ENCODE measurements at regions of chr2 and their contacts with region 1.

Region 1: GRCh38 chr2:197499594-197500526 is at the starts of genes HSPD1 and HSPE1:
- DNase-seq: peak; percentile 99
- H3K4me3 Mint-ChIP-seq: peak within 1 kb of the TSS; percentile 92
- H3K27ac Mint-ChIP-seq: peak within 1 kb of the TSS; percentile 98
- H3K4me1 Mint-ChIP-seq: peaks cover 51% of the 10 kb centered on the region
- H3K27me3 Mint-ChIP-seq: no peaks in the 10 kb centered on the region
- total RNA-seq, gene HSPD1: 1,191 to 1,210 TPM
- total RNA-seq, gene HSPE1: 294 to 310 TPM

Region 2: DNA sequence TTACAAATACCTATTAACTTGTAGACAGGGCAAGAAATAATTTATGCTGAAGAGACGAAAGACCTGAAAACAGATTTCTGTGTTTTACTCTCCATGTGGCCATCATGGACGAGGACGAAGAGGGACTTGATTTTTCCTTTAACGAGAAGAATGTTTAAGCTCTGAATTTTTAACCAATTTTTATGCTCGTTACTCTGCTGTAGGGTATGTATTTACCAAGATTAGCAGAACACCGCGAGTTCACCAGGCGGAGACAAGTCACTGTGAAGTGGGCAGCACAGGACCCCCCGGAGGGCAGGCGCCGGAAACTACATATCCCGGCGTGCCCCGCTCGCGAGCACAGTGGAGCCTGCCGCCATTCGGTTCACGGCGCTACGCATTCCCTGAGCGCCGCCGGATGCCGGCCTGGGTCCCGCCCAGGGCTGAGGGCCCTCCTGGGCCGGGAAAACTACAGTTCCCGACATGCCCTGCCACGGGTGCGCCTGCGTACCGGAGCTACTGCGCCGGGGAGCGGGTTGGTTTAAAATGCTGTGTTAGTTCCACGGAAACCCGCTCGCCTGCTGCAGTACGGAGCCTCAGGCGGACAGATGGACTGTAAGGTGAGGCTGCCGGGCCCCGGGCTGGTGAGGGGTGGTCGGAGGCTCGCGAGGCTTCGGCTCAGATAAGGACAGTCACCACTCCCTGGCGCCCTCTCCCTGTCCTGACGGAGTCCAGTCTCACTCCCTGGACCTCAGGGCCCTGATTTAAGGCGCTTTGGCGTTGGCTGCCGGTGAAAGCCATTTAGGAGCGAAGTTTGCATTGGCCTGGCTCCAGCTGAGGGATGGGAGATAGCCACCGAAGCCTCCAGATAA is 860.5 kb before region 1 on chr2 and contains the start of gene CCDC150:
- CTCF ChIA-PET with region 1: no interaction called
- intact Hi-C with region 1: loop called (anchors 1 kb)
- DNase-seq: peak; percentile 97
- H3K4me3 Mint-ChIP-seq: peak within 1 kb of the TSS; percentile 92
- H3K27ac Mint-ChIP-seq: peak within 1 kb of the TSS; percentile 48
- H3K4me1 Mint-ChIP-seq: peaks cover 11% of the 10 kb centered on the region
- H3K27me3 Mint-ChIP-seq: peaks cover 1% of the 10 kb centered on the region
- total RNA-seq, gene CCDC150: 10.1 to 10.8 TPM

Region 3: GRCh38 chr2:197198890-197199289 is 301.0 kb before region 1 on chr2:
- CTCF ChIA-PET with region 1: interaction called, 3 read pairs
- intact Hi-C with region 1: loop called (anchors 2 kb)
- DNase-seq: peak; percentile 93
- H3K4me3 Mint-ChIP-seq: peak overlapping the region; percentile 83
- H3K27ac Mint-ChIP-seq: peak overlapping the region; percentile 96
- H3K4me1 Mint-ChIP-seq: peaks cover 86% of the 10 kb centered on the region
- H3K27me3 Mint-ChIP-seq: no peaks in the 10 kb centered on the region

Region 4: DNA sequence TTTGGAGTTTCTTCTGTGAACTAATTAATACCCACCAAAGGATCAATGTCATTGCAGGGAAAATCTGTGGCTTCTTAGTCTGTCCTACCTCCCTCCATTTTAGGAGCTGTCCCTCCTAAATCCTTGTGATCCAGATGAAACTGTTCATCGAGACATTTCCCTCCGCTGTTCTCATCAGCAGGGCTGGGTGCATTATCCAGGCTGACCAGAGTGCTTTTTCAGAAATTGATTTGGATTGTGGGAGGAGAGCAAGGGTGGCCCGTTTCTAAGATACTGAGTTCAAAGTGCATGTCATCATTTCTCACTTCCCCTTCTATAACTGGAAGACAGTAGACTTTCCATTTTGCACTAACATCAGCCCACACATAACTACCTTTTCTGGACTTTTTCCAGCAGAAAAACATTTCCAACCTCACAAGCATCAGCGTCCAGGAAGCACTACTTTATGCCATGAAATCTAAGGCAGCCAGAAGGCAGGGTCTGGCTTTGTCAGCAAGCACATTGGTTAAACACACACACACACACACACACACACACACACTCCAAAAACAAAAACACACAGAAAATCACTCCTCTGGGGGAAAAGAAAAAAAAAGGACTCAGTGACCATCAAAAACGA is 283.4 kb before region 1 on chr2:
- CTCF ChIA-PET with region 1: no interaction called
- intact Hi-C with region 1: no loop called
- DNase-seq: no peak
- H3K4me3 Mint-ChIP-seq: peak overlapping the region; percentile 69
- H3K27ac Mint-ChIP-seq: peak overlapping the region; percentile 97
- H3K4me1 Mint-ChIP-seq: peaks cover 94% of the 10 kb centered on the region
- H3K27me3 Mint-ChIP-seq: no peaks in the 10 kb centered on the region

Region 5: DNA sequence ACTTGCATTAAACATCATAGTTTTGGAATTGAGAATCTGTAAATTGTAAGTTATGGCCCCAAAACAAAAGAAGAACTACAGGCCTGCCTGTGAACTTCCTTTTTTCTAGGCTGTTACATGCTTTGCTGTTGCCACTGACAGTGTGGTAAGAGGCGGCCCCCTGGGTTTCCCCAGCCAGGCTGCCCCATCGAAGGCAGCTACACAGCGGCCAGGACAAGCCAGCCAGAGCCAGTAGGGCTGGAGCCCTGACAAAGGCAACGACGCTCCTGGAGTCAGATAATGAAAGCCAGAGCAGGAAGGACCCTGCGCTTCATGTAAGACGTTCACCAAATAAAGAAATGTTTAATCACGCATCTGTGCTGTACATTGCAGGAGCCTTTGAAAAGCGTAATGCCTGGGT is 244.3 kb before region 1 on chr2:
- CTCF ChIA-PET with region 1: no interaction called
- intact Hi-C with region 1: no loop called
- DNase-seq: peak; percentile 87
- H3K4me3 Mint-ChIP-seq: peak overlapping the region; percentile 75
- H3K27ac Mint-ChIP-seq: peak overlapping the region; percentile 97
- H3K4me1 Mint-ChIP-seq: peaks cover 75% of the 10 kb centered on the region
- H3K27me3 Mint-ChIP-seq: no peaks in the 10 kb centered on the region

Region 6: GRCh38 chr2:197416268-197416667 is 83.6 kb before region 1 on chr2:
- CTCF ChIA-PET with region 1: no interaction called
- intact Hi-C with region 1: no loop called
- DNase-seq: no peak
- H3K4me3 Mint-ChIP-seq: no peak overlapping the region
- H3K27ac Mint-ChIP-seq: no peak overlapping the region
- H3K4me1 Mint-ChIP-seq: peaks cover 10% of the 10 kb centered on the region
- H3K27me3 Mint-ChIP-seq: no peaks in the 10 kb centered on the region

Region 7: GRCh38 chr2:197453161-197453914 is 46.5 kb before region 1 on chr2 and contains the start of gene COQ10B:
- CTCF ChIA-PET with region 1: no interaction called
- intact Hi-C with region 1: loop called (anchors 1 kb)
- DNase-seq: peak; percentile 99
- H3K4me3 Mint-ChIP-seq: peak within 1 kb of the TSS; percentile 100
- H3K27ac Mint-ChIP-seq: peak within 1 kb of the TSS; percentile 100
- H3K4me1 Mint-ChIP-seq: peaks cover 45% of the 10 kb centered on the region
- H3K27me3 Mint-ChIP-seq: no peaks in the 10 kb centered on the region
- total RNA-seq, gene COQ10B: 17.5 to 17.8 TPM

Region 8: DNA sequence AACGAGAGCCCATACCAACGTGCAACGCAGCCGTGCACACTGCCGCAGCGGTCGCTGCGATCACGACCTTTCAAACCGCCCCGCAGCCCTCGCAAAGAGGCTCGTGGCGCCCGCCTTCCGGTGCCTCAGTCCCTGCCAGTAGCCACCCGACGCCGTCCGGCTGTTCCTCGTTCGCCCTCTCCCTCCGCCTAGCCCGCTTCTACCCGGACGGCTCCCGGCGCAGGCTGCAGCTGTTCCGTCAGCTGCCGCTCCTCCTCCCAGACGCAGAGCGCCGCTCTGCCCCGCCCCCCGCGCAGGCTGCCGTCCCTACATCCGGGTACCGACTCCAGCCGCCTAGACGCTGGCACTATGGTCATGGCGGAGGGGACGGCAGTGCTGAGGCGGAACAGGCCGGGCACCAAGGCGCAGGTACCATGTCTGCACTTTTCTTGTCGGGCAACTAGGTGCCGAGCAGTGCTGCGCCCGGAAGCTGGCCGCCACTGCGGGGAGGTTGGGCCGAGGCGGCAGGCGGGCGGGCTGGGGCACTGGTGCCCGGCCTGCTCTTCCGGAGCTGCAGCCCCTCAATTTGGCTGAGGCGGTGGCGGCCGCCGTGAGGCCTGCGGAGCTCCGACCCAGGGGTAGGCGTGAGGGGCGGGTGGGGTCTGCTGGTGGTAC is 16.0 kb after region 1 on chr2 and contains the start of gene MOB4:
- CTCF ChIA-PET with region 1: interaction called, 3 read pairs
- intact Hi-C with region 1: loop called (anchors 1 kb)
- DNase-seq: peak; percentile 93
- H3K4me3 Mint-ChIP-seq: peak within 1 kb of the TSS; percentile 98
- H3K27ac Mint-ChIP-seq: peak within 1 kb of the TSS; percentile 89
- H3K4me1 Mint-ChIP-seq: peaks cover 37% of the 10 kb centered on the region
- H3K27me3 Mint-ChIP-seq: no peaks in the 10 kb centered on the region
- total RNA-seq, gene MOB4: 10.7 to 14.1 TPM

Region 9: DNA sequence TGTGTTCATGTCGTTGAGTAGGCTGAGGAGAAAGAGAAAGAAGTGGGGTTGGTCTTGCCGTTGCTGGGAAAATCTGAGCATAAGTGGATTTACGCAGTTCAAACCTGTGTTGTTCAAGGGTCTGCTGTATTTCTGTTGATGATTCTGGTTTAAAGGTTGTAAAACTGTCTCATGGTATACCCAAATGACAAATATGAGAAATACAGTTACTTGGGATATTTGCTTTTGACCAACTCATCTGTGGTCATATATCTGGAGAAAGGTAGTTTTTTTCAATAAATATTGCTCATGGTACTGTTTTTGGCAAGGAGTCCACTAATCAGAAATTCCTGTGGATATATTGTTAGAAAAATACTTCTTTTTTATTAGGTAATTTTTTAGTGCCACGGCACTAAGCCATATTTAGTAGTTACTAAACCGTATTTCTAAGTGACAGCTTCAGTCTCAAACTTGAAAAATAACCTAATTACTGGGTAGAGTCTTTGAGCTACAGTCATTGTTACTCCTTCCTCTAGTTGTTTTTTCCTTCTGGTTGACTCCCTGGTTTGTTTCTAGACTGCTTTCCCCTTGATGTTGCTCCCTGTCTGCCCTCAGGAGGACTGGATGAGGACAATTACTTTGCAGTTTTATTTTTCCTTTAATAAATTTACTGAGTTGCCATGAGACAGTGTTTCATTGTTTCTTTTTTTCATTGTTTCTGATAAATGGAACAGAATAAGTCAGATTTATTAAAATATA is 47.5 kb after region 1 on chr2:
- CTCF ChIA-PET with region 1: no interaction called
- intact Hi-C with region 1: no loop called
- DNase-seq: no peak
- H3K4me3 Mint-ChIP-seq: no peak overlapping the region
- H3K27ac Mint-ChIP-seq: no peak overlapping the region
- H3K4me1 Mint-ChIP-seq: peaks cover 2% of the 10 kb centered on the region
- H3K27me3 Mint-ChIP-seq: no peaks in the 10 kb centered on the region

Region 10: GRCh38 chr2:197599285-197599965 is 99.6 kb after region 1 on chr2:
- CTCF ChIA-PET with region 1: no interaction called
- intact Hi-C with region 1: loop called (anchors 2 kb)
- DNase-seq: peak; percentile 34
- H3K4me3 Mint-ChIP-seq: peak overlapping the region; percentile 22
- H3K27ac Mint-ChIP-seq: no peak overlapping the region
- H3K4me1 Mint-ChIP-seq: peaks cover 5% of the 10 kb centered on the region
- H3K27me3 Mint-ChIP-seq: peaks cover 4% of the 10 kb centered on the region

Measured in activated naive CD4-positive, alpha-beta T cell treated with anti-CD3 and anti-CD28 coated beads for 36 hours (primary cell).